SK-N-SH (cell line): ENCODE measurements at regions of chr7 and their contacts with region 1.

Region 1: GRCh38 chr7:73329861-73330581 is 2.1 kb downstream of the FKBP6 start:
- DNase-seq: peak; percentile 35
- H3K4me3 ChIP-seq: no peak overlapping the region
- H3K27ac ChIP-seq: no peak overlapping the region
- H3K4me1 ChIP-seq: no peaks in the 10 kb centered on the region
- H3K27me3 ChIP-seq: peaks cover 17% of the 10 kb centered on the region; the same call in 1 of the 2 replicates
- CTCF ChIP-seq: no peak
- EP300 ChIP-seq: no peak
- RAD21 ChIP-seq: no peak

Region 2: DNA sequence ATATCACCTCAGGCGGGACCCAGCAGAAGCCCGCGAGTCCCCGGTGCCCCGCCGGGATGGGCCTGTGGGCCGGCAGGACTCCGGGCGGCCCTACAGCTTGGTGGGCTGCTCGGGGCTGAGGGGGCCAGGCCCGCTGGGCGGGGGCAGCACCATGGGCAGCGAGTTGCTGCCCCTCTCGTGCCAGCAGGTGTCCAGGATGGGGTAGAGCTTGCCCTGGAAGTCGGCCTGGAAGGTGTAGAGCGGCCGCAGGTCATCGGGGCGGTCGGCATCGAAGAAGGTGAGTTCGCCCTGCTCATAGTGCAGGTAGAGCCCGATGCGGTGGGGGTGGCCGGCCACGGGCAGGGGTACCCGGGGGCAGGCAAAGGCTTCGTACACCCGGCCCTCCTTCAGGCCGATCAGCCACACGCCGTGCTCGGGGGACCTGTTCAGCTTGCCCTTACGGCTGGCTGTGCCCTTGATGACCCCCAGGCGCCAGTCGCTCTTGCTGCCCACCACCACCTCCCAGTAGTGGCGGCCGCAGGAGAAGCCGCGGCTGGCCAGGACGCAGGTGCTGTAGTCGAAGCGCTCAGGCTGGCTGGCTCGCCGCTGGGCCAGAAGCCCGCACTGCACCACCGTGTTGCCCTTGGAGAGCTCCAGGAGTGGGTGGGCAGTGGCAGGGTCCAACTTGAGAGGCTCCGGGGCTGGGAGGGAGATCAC is 17.0 kb before region 1 on chr7:
- CTCF ChIA-PET with region 1: interaction called, 18 read pairs
- POLR2A ChIA-PET with region 1: no interaction called
- DNase-seq: peak; percentile 35
- H3K4me3 ChIP-seq: no peak overlapping the region
- H3K27ac ChIP-seq: no peak overlapping the region
- H3K4me1 ChIP-seq: peaks cover 0 to 5% of the 10 kb centered on the region in 2 experiments; a peak in 1 of 4 replicates
- H3K27me3 ChIP-seq: no peaks in the 10 kb centered on the region
- CTCF ChIP-seq: no peak
- EP300 ChIP-seq: no peak
- RAD21 ChIP-seq: no peak

Region 3: DNA sequence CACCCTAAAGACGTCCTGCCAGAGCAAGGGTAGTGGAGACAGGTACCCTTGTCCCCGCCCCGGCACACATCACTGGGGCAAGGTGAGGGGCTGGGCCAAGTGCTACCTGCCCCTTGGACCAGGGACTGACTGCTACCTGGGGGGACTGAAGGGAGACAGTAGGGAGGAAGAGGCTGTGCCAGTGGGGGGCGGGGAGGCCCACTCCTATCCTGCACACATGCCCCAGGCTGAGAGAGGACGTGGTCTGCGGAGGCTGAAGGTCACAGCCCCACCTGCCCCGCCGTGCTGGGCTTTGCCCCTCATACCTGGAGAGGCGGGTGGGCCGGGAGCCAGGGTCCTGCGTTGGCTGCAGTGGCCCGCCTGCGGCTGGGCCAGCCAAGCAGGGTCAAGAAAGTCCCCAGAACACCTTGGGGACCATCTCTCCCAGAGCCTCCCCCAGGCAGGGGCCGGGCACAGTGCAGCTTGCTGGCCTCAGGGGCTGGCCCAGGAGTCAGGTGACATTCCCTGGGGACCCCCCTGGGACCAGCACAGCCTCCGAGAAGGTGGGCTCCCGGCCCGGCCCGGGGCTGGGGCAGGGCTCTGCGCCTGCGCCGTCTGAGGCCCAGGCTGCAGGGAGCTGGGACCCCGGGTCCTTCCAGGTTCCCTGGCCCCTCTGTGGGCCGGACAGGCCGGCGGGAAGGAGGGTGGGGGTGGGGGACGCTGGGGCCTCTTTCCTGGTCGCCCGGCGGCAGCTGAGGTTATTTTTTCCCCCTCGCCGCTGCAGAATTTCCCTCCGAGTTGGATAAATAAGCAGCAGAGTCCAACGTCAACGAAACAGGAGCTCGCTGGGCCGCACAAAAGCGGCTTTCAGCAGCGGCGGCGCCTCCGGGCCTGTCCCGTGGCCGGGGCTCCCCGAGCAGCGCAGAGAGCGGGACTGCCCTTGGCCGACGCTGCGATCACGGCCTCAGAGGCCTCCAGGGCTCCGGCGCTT is 93.8 kb after region 1 on chr7:
- CTCF ChIA-PET with region 1: no interaction called
- POLR2A ChIA-PET with region 1: no interaction called
- DNase-seq: no peak
- H3K4me3 ChIP-seq: no peak overlapping the region
- H3K27ac ChIP-seq: no peak overlapping the region
- H3K4me1 ChIP-seq: peaks cover 0 to 2% of the 10 kb centered on the region in 2 experiments; a peak in 1 of 4 replicates
- H3K27me3 ChIP-seq: no peaks in the 10 kb centered on the region
- CTCF ChIP-seq: no peak
- EP300 ChIP-seq: no peak
- RAD21 ChIP-seq: no peak

Region 4: DNA sequence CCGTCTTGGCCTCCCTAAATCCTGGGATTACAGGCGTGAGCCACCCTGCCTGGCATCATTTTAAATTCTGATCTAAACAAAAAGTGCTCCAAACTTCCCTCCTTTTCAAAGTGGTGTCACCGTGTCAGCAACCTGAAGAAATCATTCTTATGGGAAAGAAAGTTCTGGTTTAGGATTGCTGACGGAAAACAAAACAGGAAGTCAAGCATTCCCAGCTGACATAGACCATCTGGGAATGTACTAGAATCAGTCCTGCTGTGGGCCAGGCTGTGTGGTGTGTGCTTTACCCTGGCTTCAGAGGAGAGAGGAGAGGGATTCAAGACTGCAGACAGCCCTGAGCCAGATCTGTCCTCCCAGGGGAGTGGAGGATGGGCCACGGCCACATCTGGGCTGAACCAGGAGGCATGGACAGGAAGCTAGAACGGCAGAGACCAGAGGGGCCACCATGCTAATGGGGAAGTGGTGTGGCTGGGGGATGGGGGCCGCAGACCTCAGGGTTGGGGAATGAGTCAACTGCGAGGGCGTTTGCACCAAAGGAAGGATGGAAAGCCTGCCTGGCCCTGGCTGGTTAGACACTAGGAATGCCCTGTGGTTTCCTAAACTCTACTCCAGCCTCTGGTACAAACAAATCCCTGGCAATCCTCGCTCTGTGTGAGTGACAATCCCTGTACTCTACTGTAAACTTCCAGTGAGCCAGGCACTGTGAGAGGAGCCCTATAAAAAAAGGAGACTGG is 942.5 kb after region 1 on chr7:
- CTCF ChIA-PET with region 1: no interaction called
- POLR2A ChIA-PET with region 1: no interaction called
- DNase-seq: peak; percentile 68
- H3K4me3 ChIP-seq: no peak overlapping the region
- H3K27ac ChIP-seq: peak overlapping the region; percentile 56 to 99
- H3K4me1 ChIP-seq: peaks cover 4 to 16% of the 10 kb centered on the region in 2 experiments; a peak in 3 of 4 replicates
- H3K27me3 ChIP-seq: no peaks in the 10 kb centered on the region
- CTCF ChIP-seq: no peak
- EP300 ChIP-seq: peak in 1 of 2 experiments; percentile 67; a peak in 2 of 4 replicates
- RAD21 ChIP-seq: no peak